Right cardiac atrium (tissue), 5 donors: ENCODE measurements at regions of chr13 and their contacts with region 1.

Region 1: DNA sequence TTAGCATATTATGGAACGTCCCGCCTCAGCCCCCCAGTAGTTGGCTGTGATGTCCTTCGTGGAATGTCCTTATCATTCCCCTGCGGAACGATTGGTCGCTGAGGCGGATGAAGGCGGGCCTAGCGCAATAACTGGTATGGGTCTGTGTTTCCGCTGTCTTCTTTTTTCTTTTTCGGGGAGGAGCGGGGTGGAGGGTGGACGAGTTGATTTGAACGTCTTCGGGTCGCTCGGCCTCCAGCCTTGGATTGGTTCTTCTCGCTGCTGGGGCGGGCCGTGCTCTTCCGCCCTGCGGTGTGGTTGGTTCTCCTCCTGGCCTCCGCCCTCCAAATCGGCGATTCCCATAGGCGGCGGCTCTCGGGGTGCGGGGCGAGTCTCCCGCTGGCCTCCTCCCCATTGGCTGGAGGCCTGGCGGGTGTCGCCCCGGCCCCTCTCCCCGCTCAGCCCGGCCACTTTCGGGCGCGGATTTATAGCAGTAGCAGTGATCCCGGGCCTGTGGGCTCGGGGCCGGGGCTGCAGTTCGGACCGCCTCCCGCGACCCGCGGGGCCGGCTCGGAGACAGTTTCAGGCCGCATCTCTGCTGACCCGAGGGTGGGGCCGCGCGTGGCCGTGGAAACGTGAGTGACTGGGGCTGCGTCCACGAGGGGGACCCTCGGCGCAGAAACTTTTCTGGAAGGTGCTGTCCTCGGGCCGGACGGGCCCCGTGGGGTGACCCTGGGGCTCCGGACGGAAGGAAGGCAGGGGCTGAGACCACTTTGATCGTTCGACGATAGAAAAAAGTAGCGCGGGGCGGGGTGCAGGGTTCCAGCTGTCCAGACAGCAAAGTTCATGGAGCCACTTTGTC is 2.1 kb downstream of the ING1 start:
- DNase-seq: peak; percentile 98 to 99 (median 99)
- ATAC-seq: peak; percentile 86 to 87
- H3K4me3 ChIP-seq: peak overlapping the region; percentile 96
- H3K27ac ChIP-seq: peak overlapping the region; percentile 99
- H3K4me1 ChIP-seq: peaks cover 3% of the 10 kb centered on the region
- H3K27me3 ChIP-seq: no peaks in the 10 kb centered on the region

Region 2: GRCh38 chr13:110819203-110820014 is 103.8 kb after region 1 on chr13:
- intact Hi-C with region 1: loop called in 1 of 4 experiments (anchors 10 kb)
- DNase-seq: peak; percentile 77 to 91 (median 90)
- ATAC-seq: peak; percentile 86 to 94
- H3K4me3 ChIP-seq: no peak overlapping the region
- H3K27ac ChIP-seq: no peak overlapping the region
- H3K4me1 ChIP-seq: no peaks in the 10 kb centered on the region
- H3K27me3 ChIP-seq: no peaks in the 10 kb centered on the region